SK-N-SH (cell line): ENCODE measurements at regions of chr7 and their contacts with region 1.

Region 1: DNA sequence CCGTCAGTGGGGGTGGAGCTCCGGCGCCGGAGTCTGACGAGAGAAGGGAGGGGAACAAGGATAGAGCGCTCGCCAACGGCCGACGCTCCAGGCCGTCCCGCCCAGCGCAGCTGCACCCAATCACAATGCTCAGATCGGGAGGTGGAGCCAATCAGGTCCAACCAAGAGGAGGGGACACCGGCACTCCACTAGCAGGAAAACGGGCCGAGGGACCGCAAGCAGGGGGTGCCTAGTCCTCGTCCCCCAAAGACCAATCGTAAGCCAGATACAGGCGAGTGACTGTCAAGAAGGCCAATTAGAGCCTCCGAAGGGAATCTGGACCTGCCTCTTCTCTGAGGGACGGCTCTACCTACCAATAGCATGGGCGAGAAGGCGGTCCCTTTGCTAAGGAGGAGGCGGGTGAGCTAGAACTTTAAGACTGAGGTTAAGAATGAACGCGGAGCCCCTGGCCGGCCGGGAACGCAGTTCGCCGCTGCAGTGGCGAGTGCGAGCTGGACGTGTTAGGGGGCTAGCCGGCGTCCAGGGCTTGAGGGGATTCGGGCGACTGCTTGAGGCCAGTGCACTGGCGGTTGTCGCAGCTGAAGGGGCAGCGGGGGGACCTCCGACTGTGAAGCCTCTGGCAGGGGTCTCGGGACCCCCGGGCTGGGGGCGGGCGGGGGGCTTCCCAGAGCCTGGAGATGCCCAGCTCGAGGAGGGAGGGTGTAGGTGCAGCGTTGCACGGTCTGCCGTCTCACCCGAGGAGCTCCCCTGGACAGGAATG is at the start of gene FBXO24:
- DNase-seq: peak; percentile 100
- H3K4me3 ChIP-seq: peak within 1 kb of the TSS; percentile 83 to 92
- H3K27ac ChIP-seq: peak within 1 kb of the TSS; percentile 77 to 94
- H3K4me1 ChIP-seq: peaks cover 6 to 15% of the 10 kb centered on the region in 2 experiments; a peak in 2 of 4 replicates
- H3K27me3 ChIP-seq: no peaks in the 10 kb centered on the region
- CTCF ChIP-seq: no peak
- EP300 ChIP-seq: no peak; a peak in 1 of 4 replicates
- RAD21 ChIP-seq: no peak
- polyA plus RNA-seq, gene FBXO24: 0.71 and 0.94 TPM in 2 replicates

Region 2: DNA sequence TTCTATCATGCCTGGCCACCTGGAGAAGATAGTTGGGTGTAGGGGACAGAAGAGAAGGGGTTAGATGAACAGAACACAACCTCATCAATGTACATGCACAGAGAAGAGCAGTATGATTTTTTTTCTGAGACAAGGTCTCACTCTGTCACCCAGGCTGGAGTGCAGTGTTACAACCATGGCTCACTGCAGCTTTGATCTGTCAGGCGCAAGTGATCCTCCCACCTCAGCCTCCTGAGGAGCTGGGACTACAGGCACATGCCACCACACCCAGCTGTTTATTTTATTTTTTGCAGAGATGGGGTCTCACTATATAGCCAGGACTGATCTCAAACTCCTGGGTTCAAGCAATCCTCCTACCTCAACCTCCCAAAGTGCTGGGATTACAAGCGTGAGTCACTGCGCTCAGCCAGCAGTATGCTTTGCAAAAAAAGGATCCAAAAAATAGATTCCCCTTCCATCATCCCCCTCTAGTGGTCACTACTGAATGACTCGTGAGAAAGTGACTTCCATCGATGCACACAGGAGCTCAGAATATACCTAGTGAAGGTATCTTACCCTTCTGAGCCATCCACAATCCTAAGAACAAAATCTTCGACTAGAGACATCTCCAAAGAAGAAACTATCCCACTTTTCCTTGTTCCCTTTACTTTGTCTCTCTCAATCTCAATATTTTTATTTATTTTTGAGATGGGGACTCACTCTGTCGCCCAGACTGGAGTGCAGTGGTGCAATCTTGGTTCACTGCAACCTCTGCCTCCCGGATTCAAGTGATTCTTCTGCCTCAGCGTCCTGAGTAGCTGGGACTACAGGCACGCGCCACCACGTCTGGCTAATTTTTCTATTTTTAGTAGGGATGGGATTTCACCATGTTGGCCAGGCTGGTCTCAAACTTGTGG is 178.9 kb before region 1 on chr7:
- CTCF ChIA-PET with region 1: no interaction called
- POLR2A ChIA-PET with region 1: no interaction called
- DNase-seq: peak; percentile 75
- H3K4me3 ChIP-seq: no peak overlapping the region
- H3K27ac ChIP-seq: no peak overlapping the region
- H3K4me1 ChIP-seq: no peaks in the 10 kb centered on the region
- H3K27me3 ChIP-seq: no peaks in the 10 kb centered on the region
- CTCF ChIP-seq: peak; percentile 90
- EP300 ChIP-seq: no peak
- RAD21 ChIP-seq: peak; percentile 81

Region 3: GRCh38 chr7:100532165-100533022 is 54.1 kb before region 1 on chr7:
- CTCF ChIA-PET with region 1: no interaction called
- POLR2A ChIA-PET with region 1: no interaction called
- DNase-seq: no peak
- H3K4me3 ChIP-seq: no peak overlapping the region
- H3K27ac ChIP-seq: no peak overlapping the region
- H3K4me1 ChIP-seq: no peaks in the 10 kb centered on the region
- H3K27me3 ChIP-seq: no peaks in the 10 kb centered on the region
- CTCF ChIP-seq: no peak
- EP300 ChIP-seq: no peak
- RAD21 ChIP-seq: no peak

Region 4: DNA sequence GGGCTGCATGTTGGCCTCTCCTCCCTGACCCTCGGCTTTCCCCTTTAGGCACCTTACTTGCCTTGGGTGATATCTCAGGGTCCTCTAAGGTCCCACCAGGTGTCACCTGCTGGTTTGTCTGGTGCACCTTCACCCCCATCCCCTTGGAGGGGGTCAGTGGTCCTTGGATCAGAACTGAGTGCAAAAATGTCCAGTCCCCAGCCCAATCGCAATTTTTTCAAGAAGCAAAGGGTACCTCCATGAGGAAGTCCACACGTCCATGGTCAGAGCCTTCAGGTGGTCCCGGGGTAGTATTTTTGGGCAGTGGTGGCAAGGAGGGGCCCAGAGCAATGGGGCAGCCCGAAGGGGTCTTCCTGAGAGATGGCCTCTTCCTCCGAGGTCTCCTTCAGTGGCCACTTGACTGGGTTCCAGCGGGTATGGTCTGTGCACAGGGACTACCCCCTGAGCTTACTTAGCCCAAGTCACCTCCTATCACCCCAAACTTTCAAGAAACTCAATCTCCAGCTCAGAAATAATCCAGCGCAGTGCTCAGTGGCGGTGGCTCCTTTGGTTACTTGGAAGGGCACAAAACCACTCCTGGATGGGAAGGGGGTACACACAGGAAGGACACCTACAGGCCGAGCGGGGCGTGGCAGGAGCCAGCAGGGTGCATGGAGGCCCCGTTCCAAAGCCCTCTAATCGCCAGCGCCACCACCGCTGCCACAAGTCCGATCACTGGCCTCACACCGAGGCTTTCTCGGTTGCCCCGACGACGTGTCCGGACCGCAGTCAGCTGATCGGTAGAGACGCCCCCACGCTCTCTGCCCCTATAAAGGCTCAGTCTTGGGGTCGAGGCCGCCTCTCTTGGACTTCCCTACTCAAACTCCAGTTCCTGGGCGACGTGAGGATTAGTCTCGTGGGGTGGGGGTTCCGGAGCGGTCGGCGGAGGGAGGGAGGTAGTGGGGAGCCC is 17.3 kb before region 1 on chr7:
- CTCF ChIA-PET with region 1: interaction called, 149 read pairs
- POLR2A ChIA-PET with region 1: interaction called, 19 read pairs
- DNase-seq: peak; percentile 79
- H3K4me3 ChIP-seq: no peak overlapping the region
- H3K27ac ChIP-seq: no peak overlapping the region
- H3K4me1 ChIP-seq: peaks cover 0 to 42% of the 10 kb centered on the region in 2 experiments; a peak in 1 of 4 replicates
- H3K27me3 ChIP-seq: no peaks in the 10 kb centered on the region
- CTCF ChIP-seq: peak; percentile 51
- EP300 ChIP-seq: no peak
- RAD21 ChIP-seq: no peak

Region 5: DNA sequence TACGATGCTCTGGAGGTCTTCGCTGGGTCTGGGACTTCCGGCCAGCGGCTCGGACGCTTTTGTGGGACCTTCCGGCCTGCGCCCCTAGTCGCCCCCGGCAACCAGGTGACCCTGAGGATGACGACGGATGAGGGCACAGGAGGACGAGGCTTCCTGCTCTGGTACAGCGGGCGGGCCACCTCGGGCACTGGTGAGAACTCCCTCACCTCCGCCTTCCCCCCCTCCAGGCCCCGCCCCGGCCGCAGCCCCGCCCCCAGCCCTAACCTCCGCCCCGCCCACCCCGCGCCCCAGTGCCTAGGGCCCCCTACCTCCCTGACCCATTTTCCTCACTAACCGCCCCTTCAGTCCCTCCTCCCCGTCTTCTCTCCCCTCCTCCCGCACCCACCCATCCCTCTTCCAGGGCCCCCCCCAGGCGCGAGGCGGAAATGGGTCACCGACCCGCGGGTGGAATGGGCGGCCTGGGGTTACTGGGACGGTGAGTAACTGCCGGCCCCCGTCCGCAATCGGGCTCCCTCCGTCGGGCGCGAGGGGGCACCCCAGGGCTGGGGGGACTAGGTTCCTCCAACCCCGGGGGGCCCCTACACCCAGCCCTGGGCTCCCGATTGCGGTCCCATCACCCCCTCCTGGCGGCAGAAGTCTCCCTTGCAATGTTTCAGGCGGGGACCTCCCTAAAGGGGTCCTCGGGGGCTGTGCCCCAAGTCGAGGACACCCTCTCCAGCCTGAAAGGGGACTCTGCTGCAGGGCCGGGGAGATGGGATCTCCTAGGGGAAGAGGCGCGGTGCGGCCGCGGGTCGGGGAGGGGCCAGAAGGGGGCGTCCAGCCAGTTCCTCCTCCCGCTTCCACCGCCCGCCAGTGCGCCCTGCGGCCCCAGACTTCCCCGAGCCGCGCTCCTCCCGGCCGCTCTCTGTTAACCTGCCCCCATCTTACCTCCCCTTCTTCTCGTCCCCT is 17.9 kb after region 1 on chr7:
- CTCF ChIA-PET with region 1: interaction called, 62 read pairs
- POLR2A ChIA-PET with region 1: interaction called, 63 read pairs
- DNase-seq: peak; percentile 98
- H3K4me3 ChIP-seq: peak overlapping the region; percentile 67 to 76
- H3K27ac ChIP-seq: peak overlapping the region; percentile 69 to 97
- H3K4me1 ChIP-seq: peaks cover 10 to 25% of the 10 kb centered on the region in 2 experiments; a peak in 3 of 4 replicates
- H3K27me3 ChIP-seq: no peaks in the 10 kb centered on the region
- CTCF ChIP-seq: peak; percentile 59
- EP300 ChIP-seq: peak in 1 of 2 experiments; percentile 39; a peak in 1 of 4 replicates
- RAD21 ChIP-seq: no peak

Region 6: DNA sequence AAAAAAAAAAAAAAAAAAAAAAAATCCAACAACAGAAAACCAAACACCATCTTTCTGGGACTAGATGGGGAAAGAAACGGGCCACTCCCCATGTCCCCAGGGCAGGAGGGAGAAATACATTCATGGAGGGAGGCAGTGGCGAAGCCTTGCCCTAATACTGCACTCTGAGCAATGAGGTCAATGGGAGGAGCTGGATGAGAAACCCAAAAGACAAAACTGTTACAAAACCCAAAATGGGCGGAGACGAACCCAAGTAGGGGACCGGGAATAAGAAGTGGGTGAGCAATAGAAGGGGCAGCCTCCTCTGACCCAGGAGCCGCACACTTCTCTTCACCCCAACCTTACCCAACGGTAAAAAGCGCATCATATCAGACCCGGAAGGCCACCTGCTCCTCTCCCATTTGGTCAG is 93.7 kb after region 1 on chr7:
- CTCF ChIA-PET with region 1: interaction called, 11 read pairs
- POLR2A ChIA-PET with region 1: interaction called, 3 read pairs
- DNase-seq: peak; percentile 44
- H3K4me3 ChIP-seq: no peak overlapping the region
- H3K27ac ChIP-seq: no peak overlapping the region; a peak in 1 of 4 replicates
- H3K4me1 ChIP-seq: peaks cover 0 to 35% of the 10 kb centered on the region in 2 experiments; a peak in 1 of 4 replicates
- H3K27me3 ChIP-seq: no peaks in the 10 kb centered on the region
- CTCF ChIP-seq: no peak
- EP300 ChIP-seq: no peak
- RAD21 ChIP-seq: no peak